Activated CD8-positive, alpha-beta T cell treated with anti-CD3 and anti-CD28 coated beads for 36 hours (primary cell): ENCODE measurements at regions of chr7 and their contacts with region 1.

Region 1: GRCh38 chr7:92461027-92462003 is 14.0 kb downstream of the GATAD1 start:
- DNase-seq: peak; percentile 41
- ATAC-seq: peak; percentile 80
- H3K4me3 Mint-ChIP-seq: no peak overlapping the region
- H3K27ac Mint-ChIP-seq: no peak overlapping the region
- H3K4me1 Mint-ChIP-seq: no peaks in the 10 kb centered on the region
- H3K27me3 Mint-ChIP-seq: no peaks in the 10 kb centered on the region
- CTCF ChIP-seq: peak; percentile 83

Region 2: DNA sequence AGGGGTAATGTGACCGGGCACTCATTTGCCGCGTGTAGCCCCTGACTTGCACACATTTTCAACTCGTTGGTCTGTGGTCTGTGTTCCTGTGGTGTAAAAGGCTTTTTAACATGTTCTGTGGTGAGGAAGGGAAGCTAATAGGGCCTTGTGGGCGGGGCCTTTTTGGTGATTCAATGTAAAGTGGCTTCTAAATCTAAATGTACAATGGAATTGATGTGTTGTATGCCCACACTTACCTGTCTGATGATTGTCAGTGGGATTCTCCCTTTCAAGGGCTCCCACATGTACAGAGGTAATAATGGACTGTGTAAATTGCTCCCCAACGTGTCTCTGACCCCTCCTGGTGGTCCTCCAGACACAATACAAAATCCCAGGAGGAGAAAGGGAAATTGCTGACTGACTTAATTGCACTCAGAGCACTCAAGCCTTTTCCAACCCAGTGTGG is 57.1 kb before region 1 on chr7:
- CTCF ChIA-PET with region 1: no interaction called
- POLR2A ChIA-PET with region 1: no interaction called
- intact Hi-C with region 1: no loop called
- DNase-seq: peak; percentile 82
- ATAC-seq: peak; percentile 84
- H3K4me3 Mint-ChIP-seq: no peak overlapping the region
- H3K27ac Mint-ChIP-seq: peak overlapping the region; percentile 5
- H3K4me1 Mint-ChIP-seq: peaks cover 17% of the 10 kb centered on the region
- H3K27me3 Mint-ChIP-seq: no peaks in the 10 kb centered on the region
- CTCF ChIP-seq: no peak

Region 3: DNA sequence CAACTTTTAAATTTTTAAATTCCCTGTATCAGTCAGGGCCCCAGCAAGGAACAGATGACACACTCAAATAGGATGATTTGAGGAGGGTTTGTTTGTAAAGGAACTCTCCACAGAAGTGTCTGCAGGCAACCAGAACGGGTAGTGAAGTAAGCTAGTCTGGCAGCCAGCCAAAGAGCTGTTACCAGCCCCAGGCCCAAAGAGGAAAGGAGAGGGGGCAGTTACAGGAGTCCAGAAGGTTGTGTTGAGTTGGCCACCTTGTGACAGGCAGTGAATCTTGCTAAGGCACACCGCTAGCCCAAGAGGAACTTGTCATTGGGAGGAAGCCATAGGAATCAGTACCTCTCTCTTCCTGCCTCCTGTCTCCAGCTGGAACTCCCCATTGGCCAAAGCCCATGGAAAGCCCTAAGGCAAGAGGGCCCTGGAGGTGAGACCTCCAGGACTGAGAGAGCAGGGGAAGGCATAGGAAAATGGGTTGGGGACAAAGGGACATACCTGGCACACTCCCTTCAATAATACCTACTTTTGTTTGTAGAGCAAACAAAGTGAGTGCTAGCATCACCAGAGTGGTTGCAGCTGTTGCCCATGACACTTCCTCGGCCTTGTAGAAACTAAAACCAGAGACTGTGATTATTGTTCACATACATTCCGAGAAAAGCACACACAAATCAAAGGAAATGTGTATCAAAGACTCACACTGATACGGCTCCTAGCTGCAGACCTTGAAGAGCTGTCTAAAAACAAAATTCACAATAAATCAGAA is 39.5 kb before region 1 on chr7:
- CTCF ChIA-PET with region 1: interaction called, 14 read pairs
- POLR2A ChIA-PET with region 1: no interaction called
- intact Hi-C with region 1: loop called (anchors 5 kb)
- DNase-seq: no peak
- ATAC-seq: no peak
- H3K4me3 Mint-ChIP-seq: no peak overlapping the region
- H3K27ac Mint-ChIP-seq: no peak overlapping the region
- H3K4me1 Mint-ChIP-seq: peaks cover 8% of the 10 kb centered on the region
- H3K27me3 Mint-ChIP-seq: peaks cover 17% of the 10 kb centered on the region
- CTCF ChIP-seq: no peak

Region 4: DNA sequence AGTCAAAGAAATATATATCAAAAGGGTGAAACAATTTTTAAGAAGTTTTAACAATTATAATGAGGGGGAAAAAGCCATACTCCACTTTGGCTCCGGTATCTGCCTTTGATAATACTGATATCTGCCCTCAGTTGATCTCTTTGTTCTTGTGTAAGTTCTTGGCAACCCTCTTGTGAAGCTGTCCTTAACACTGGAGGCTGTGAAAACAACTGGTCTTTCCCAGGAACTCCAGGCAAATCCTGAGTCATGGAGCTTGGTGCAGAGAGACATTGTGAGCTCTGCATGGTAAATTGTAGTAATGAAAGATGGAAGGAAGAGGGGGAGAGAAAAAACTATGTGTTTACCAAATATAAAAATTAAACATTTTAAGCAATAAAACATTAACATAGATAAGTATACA is 28.3 kb after region 1 on chr7:
- CTCF ChIA-PET with region 1: interaction called, 10 read pairs
- POLR2A ChIA-PET with region 1: no interaction called
- intact Hi-C with region 1: no loop called
- DNase-seq: no peak
- ATAC-seq: no peak
- H3K4me3 Mint-ChIP-seq: no peak overlapping the region
- H3K27ac Mint-ChIP-seq: no peak overlapping the region
- H3K4me1 Mint-ChIP-seq: no peaks in the 10 kb centered on the region
- H3K27me3 Mint-ChIP-seq: no peaks in the 10 kb centered on the region
- CTCF ChIP-seq: no peak

Region 5: GRCh38 chr7:92534572-92534971 is 73.3 kb after region 1 on chr7:
- CTCF ChIA-PET with region 1: no interaction called
- POLR2A ChIA-PET with region 1: no interaction called
- intact Hi-C with region 1: no loop called
- DNase-seq: no peak
- ATAC-seq: no peak
- H3K4me3 Mint-ChIP-seq: no peak overlapping the region
- H3K27ac Mint-ChIP-seq: peak overlapping the region; percentile 31
- H3K4me1 Mint-ChIP-seq: peaks cover 22% of the 10 kb centered on the region
- H3K27me3 Mint-ChIP-seq: no peaks in the 10 kb centered on the region
- CTCF ChIP-seq: no peak